ENCODE measurements at regions of chr12 and their contacts with region 1.

Region 1: GRCh38 chr12:113184900-113185773 is at the starts of genes DDX54 and RITA1:
- DNase-seq: peak; percentile 85
- H3K4me3 Mint-ChIP-seq: peak within 1 kb of the TSS; percentile 92
- H3K27ac Mint-ChIP-seq: peak within 1 kb of the TSS; percentile 92
- H3K4me1 Mint-ChIP-seq: peaks cover 31% of the 10 kb centered on the region
- H3K27me3 Mint-ChIP-seq: no peaks in the 10 kb centered on the region
- total RNA-seq, gene DDX54: 121 and 133 TPM in 2 replicates
- total RNA-seq, gene RITA1: 27.1 and 31.4 TPM in 2 replicates

Region 2: GRCh38 chr12:112978163-112979040 is 206.7 kb before region 1 on chr12 and contains the start of gene OAS2:
- intact Hi-C with region 1: loop called (anchors 1 kb)
- DNase-seq: peak; percentile 85
- H3K4me3 Mint-ChIP-seq: peak within 1 kb of the TSS; percentile 94
- H3K27ac Mint-ChIP-seq: peak within 1 kb of the TSS; percentile 99
- H3K4me1 Mint-ChIP-seq: peaks cover 56% of the 10 kb centered on the region
- H3K27me3 Mint-ChIP-seq: no peaks in the 10 kb centered on the region
- total RNA-seq, gene OAS2: 113 and 119 TPM in 2 replicates

Region 3: GRCh38 chr12:113208041-113208934 is 23.2 kb after region 1 on chr12:
- intact Hi-C with region 1: loop called (anchors 1 kb)
- DNase-seq: peak; percentile 72
- H3K4me3 Mint-ChIP-seq: peak overlapping the region; percentile 75
- H3K27ac Mint-ChIP-seq: peak overlapping the region; percentile 96
- H3K4me1 Mint-ChIP-seq: peaks cover 65% of the 10 kb centered on the region
- H3K27me3 Mint-ChIP-seq: no peaks in the 10 kb centered on the region

Region 4: GRCh38 chr12:113334786-113335540 is 149.8 kb after region 1 on chr12 and contains the start of gene SLC8B1:
- intact Hi-C with region 1: loop called (anchors 1 kb)
- DNase-seq: peak; percentile 79
- H3K4me3 Mint-ChIP-seq: peak within 1 kb of the TSS; percentile 93
- H3K27ac Mint-ChIP-seq: peak within 1 kb of the TSS; percentile 68
- H3K4me1 Mint-ChIP-seq: peaks cover 12% of the 10 kb centered on the region
- H3K27me3 Mint-ChIP-seq: peaks cover 5% of the 10 kb centered on the region
- total RNA-seq, gene SLC8B1: 21.2 TPM in 2 replicates

Region 5: GRCh38 chr12:113965951-113966797 is 781.0 kb after region 1 on chr12 and contains the start of gene RBM19:
- intact Hi-C with region 1: loop called (anchors 10 kb)
- DNase-seq: peak; percentile 97
- H3K4me3 Mint-ChIP-seq: peak within 1 kb of the TSS; percentile 99
- H3K27ac Mint-ChIP-seq: peak within 1 kb of the TSS; percentile 99
- H3K4me1 Mint-ChIP-seq: peaks cover 60% of the 10 kb centered on the region
- H3K27me3 Mint-ChIP-seq: peaks cover 3% of the 10 kb centered on the region
- total RNA-seq, gene RBM19: 102 TPM in 2 replicates